Activated T-helper 1 cell treated with anti-CD3 and anti-CD28 coated beads, Interleukin-12 subunit alpha, Interleukin-12 subunit beta, Interleukin-2, Interleukin-4 antibody, amounts not matched to agents 30 ng/mL and 10 ng/mL and 1 ng/mL, durations not matched to agents 14 hours and 24 hours and 36 hours (primary cell): ENCODE measurements at regions of chr19 and their contacts with region 1.

Region 1: GRCh38 chr19:49473868-49474544 is at the start of gene FLT3LG:
- DNase-seq: peak; percentile 94
- H3K4me3 Mint-ChIP-seq: peak within 1 kb of the TSS; percentile 91
- H3K27ac Mint-ChIP-seq: peak within 1 kb of the TSS; percentile 97
- H3K4me1 Mint-ChIP-seq: peaks cover 45% of the 10 kb centered on the region
- H3K27me3 Mint-ChIP-seq: no peaks in the 10 kb centered on the region
- total RNA-seq, gene FLT3LG: 58.4 and 65.4 TPM in 2 replicates

Region 2: DNA sequence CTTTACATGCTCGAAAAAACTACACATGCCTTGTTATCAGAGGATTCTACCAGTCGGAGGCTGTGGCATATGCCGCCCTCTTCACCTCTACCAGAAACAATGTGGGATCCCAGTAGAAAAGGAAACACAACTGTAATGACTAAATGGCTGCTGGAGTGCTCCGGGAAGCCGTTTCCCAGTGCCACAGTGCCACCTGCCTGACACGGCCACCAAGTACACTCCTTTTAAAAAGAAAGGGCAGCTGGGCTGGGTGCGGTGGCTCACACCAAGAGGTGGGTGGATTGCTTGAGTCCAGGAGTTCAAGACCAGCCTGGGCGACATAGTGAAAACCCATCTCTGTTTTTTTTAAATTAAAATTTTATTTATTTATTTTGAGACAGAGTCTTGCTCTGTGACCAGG is 249.2 kb before region 1 on chr19:
- intact Hi-C with region 1: loop called (anchors 1 kb)
- DNase-seq: peak; percentile 14
- H3K4me3 Mint-ChIP-seq: no peak overlapping the region
- H3K27ac Mint-ChIP-seq: no peak overlapping the region
- H3K4me1 Mint-ChIP-seq: peaks cover 7% of the 10 kb centered on the region
- H3K27me3 Mint-ChIP-seq: peaks cover 10% of the 10 kb centered on the region

Region 3: GRCh38 chr19:49272184-49272583 is 201.8 kb before region 1 on chr19:
- intact Hi-C with region 1: loop called (anchors 2 kb)
- DNase-seq: no peak
- H3K4me3 Mint-ChIP-seq: no peak overlapping the region
- H3K27ac Mint-ChIP-seq: no peak overlapping the region
- H3K4me1 Mint-ChIP-seq: no peaks in the 10 kb centered on the region
- H3K27me3 Mint-ChIP-seq: peaks cover 14% of the 10 kb centered on the region

Region 4: GRCh38 chr19:49391581-49392399 is 82.2 kb before region 1 on chr19:
- intact Hi-C with region 1: loop called (anchors 1 kb)
- DNase-seq: peak; percentile 71
- H3K4me3 Mint-ChIP-seq: no peak overlapping the region
- H3K27ac Mint-ChIP-seq: peak overlapping the region; percentile 5
- H3K4me1 Mint-ChIP-seq: peaks cover 12% of the 10 kb centered on the region
- H3K27me3 Mint-ChIP-seq: peaks cover 3% of the 10 kb centered on the region

Region 5: GRCh38 chr19:49451430-49452181 is 22.4 kb before region 1 on chr19 and contains the start of gene PIH1D1:
- intact Hi-C with region 1: loop called (anchors 1 kb)
- DNase-seq: peak; percentile 94
- H3K4me3 Mint-ChIP-seq: peak within 1 kb of the TSS; percentile 96
- H3K27ac Mint-ChIP-seq: peak within 1 kb of the TSS; percentile 99
- H3K4me1 Mint-ChIP-seq: peaks cover 55% of the 10 kb centered on the region
- H3K27me3 Mint-ChIP-seq: no peaks in the 10 kb centered on the region
- total RNA-seq, gene PIH1D1: 124 and 126 TPM in 2 replicates

Region 6: DNA sequence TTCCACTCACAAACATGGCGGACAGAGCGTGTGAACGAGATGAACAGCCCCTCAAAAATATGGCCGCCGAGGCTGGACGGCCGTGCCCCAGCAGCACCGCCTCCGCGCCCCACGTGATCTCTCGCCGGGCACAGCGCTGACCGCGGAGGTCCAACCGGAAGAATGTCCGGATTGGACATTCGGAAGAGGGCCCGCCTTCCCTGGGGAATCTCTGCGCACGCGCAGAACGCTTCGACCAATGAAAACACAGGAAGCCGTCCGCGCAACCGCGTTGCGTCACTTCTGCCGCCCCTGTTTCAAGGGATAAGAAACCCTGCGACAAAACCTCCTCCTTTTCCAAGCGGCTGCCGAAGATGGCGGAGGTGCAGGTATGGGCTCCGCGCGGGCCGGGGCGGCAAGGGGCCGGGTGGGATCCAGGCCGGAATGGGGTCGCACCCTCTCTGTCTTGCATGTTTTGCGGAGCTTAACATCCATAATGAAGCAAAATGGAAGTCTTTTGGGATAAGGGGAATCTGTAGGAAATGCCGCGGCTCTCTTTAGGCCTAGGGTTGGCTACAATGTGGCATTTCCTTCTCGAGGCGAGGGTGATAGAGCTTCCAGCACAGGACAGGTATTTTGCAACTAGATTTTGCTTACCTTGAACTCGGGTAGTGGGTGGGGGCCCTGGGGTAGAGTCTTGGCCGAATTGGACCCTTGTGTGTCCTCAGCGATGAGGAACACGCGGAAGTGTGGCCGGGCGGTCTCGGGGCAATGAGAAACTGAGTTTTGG is 13.5 kb after region 1 on chr19 and contains the start of gene RPL13A:
- intact Hi-C with region 1: loop called (anchors 1 kb)
- DNase-seq: peak; percentile 100
- H3K4me3 Mint-ChIP-seq: peak within 1 kb of the TSS; percentile 98
- H3K27ac Mint-ChIP-seq: peak within 1 kb of the TSS; percentile 94
- H3K4me1 Mint-ChIP-seq: peaks cover 27% of the 10 kb centered on the region
- H3K27me3 Mint-ChIP-seq: peaks cover 4% of the 10 kb centered on the region
- total RNA-seq, gene RPL13A: 2,876 and 2,988 TPM in 2 replicates